GM12878 (cell line): ENCODE measurements at regions of chr9 and their contacts with region 1.

Region 1: GRCh38 chr9:71819115-71819739 is 50.9 kb upstream of the CEMIP2 start:
- DNase-seq: no peak
- ATAC-seq: no peak
- H3K4me3 ChIP-seq: no peak overlapping the region
- H3K27ac ChIP-seq: no peak overlapping the region
- H3K4me1 ChIP-seq: no peaks in the 10 kb centered on the region
- H3K27me3 ChIP-seq: no peaks in the 10 kb centered on the region
- CTCF ChIP-seq: peak; percentile 56 to 62 (median 58); a peak in 5 of 6 replicates
- EP300 ChIP-seq: no peak
- POLR2A ChIP-seq: no peak
- RAD21 ChIP-seq: peak; percentile 69

Region 2: DNA sequence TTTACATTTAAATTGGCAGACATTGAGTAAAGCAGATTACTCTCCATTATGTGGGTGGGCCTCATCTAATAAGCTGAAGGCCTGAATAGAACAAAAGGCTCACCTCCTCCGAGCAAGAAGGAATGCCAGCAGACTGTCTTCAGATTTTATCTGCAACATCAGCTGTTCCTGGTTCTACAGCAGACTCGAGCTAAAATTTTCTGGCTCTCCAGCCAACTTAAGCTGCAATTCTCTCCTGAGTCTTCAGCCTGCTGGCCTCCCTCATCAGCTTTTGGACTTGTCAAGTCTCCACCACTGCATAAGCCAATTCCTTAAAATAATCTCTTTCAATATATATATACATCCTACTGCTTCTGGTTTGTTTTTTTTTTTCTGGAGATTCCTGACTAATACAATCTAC is 710.3 kb before region 1 on chr9:
- CTCF ChIA-PET with region 1: no interaction called
- POLR2A ChIA-PET with region 1: no interaction called
- RAD21 ChIA-PET with region 1: no interaction called
- SMC1A ChIA-PET with region 1: no interaction called
- in situ Hi-C with region 1: no loop called
- intact Hi-C with region 1: no loop called
- DNase-seq: no peak
- ATAC-seq: no peak
- H3K4me3 ChIP-seq: no peak overlapping the region
- H3K27ac ChIP-seq: no peak overlapping the region
- H3K4me1 ChIP-seq: no peaks in the 10 kb centered on the region
- H3K27me3 ChIP-seq: no peaks in the 10 kb centered on the region; a peak in 1 of 4 replicates
- CTCF ChIP-seq: no peak
- EP300 ChIP-seq: no peak
- POLR2A ChIP-seq: no peak
- RAD21 ChIP-seq: no peak

Region 3: GRCh38 chr9:71571186-71571585 is 248.0 kb before region 1 on chr9:
- CTCF ChIA-PET with region 1: no interaction called
- POLR2A ChIA-PET with region 1: no interaction called
- RAD21 ChIA-PET with region 1: no interaction called
- SMC1A ChIA-PET with region 1: no interaction called
- in situ Hi-C with region 1: no loop called
- intact Hi-C with region 1: no loop called
- DNase-seq: no peak
- ATAC-seq: no peak
- H3K4me3 ChIP-seq: no peak overlapping the region
- H3K27ac ChIP-seq: no peak overlapping the region
- H3K4me1 ChIP-seq: no peaks in the 10 kb centered on the region
- H3K27me3 ChIP-seq: no peaks in the 10 kb centered on the region
- CTCF ChIP-seq: no peak
- EP300 ChIP-seq: no peak
- POLR2A ChIP-seq: no peak
- RAD21 ChIP-seq: no peak

Region 4: DNA sequence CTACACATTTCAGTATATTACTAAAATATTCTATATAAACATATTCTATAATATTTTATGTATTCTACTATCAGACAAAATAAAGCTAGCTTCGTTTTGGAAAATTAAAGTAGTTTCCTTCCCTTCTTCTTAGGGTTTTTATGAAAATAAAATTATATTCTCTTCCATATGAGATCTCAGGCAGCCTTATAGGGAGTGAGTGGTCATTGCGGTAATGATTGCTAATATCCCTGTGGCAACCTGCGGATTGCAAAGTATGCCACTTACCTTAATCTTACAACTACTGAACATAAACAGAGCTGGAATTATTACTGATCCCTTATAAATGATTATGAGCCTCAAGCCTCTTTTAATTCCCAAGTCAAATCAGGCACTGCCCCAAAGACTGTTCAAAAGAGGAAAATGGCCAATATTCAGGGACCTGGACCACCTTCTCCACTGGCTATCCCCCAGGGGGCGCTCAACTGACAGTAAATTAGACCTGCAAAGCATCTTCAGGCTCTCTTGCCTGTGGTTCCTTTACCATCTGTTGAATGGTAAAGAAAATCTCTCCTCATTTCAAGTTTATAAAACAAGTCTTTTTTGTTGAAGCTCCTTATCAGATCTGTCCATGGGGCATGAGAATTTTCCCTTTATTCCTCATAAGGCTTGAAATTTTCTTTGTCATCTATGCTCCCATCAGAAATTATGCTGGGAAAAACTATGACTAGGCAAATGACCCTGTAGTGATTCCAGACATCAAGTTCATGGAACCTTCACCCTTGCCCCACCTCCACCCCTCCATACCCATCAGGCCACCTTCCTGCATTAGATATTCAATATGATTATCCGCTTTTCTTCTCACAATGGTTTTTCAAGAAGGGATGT is 214.8 kb before region 1 on chr9:
- CTCF ChIA-PET with region 1: interaction called, 19 read pairs
- POLR2A ChIA-PET with region 1: no interaction called
- RAD21 ChIA-PET with region 1: interaction called, 6 read pairs
- SMC1A ChIA-PET with region 1: interaction called, 25 read pairs
- in situ Hi-C with region 1: loop called (anchors 5 kb)
- intact Hi-C with region 1: loop called (anchors 1 kb)
- DNase-seq: no peak
- ATAC-seq: peak; percentile 93
- H3K4me3 ChIP-seq: no peak overlapping the region
- H3K27ac ChIP-seq: no peak overlapping the region
- H3K4me1 ChIP-seq: no peaks in the 10 kb centered on the region
- H3K27me3 ChIP-seq: no peaks in the 10 kb centered on the region
- CTCF ChIP-seq: peak; percentile 60 to 74 (median 62)
- EP300 ChIP-seq: no peak
- POLR2A ChIP-seq: no peak
- RAD21 ChIP-seq: peak; percentile 75

Region 5: GRCh38 chr9:71737455-71737854 is 81.8 kb before region 1 on chr9:
- CTCF ChIA-PET with region 1: no interaction called
- POLR2A ChIA-PET with region 1: no interaction called
- RAD21 ChIA-PET with region 1: no interaction called
- SMC1A ChIA-PET with region 1: no interaction called
- in situ Hi-C with region 1: no loop called
- intact Hi-C with region 1: no loop called
- DNase-seq: no peak
- ATAC-seq: no peak
- H3K4me3 ChIP-seq: no peak overlapping the region
- H3K27ac ChIP-seq: no peak overlapping the region
- H3K4me1 ChIP-seq: no peaks in the 10 kb centered on the region
- H3K27me3 ChIP-seq: no peaks in the 10 kb centered on the region
- CTCF ChIP-seq: no peak
- EP300 ChIP-seq: no peak
- POLR2A ChIP-seq: no peak
- RAD21 ChIP-seq: no peak

Region 6: GRCh38 chr9:71778085-71778484 is 41.1 kb before region 1 on chr9:
- CTCF ChIA-PET with region 1: interaction called, 13 read pairs
- POLR2A ChIA-PET with region 1: no interaction called
- RAD21 ChIA-PET with region 1: interaction called, 6 read pairs
- SMC1A ChIA-PET with region 1: interaction called, 17 read pairs
- in situ Hi-C with region 1: no loop called
- intact Hi-C with region 1: loop called (anchors 5 kb)
- DNase-seq: no peak
- ATAC-seq: no peak
- H3K4me3 ChIP-seq: no peak overlapping the region
- H3K27ac ChIP-seq: no peak overlapping the region
- H3K4me1 ChIP-seq: peaks cover 18% of the 10 kb centered on the region
- H3K27me3 ChIP-seq: no peaks in the 10 kb centered on the region
- CTCF ChIP-seq: no peak
- EP300 ChIP-seq: no peak
- POLR2A ChIP-seq: no peak
- RAD21 ChIP-seq: no peak

Region 7: GRCh38 chr9:71795097-71795813 is 24.0 kb before region 1 on chr9:
- CTCF ChIA-PET with region 1: interaction called, 10 read pairs
- POLR2A ChIA-PET with region 1: no interaction called
- RAD21 ChIA-PET with region 1: no interaction called
- SMC1A ChIA-PET with region 1: interaction called, 15 read pairs
- in situ Hi-C with region 1: no loop called
- intact Hi-C with region 1: no loop called
- DNase-seq: peak; percentile 91
- ATAC-seq: peak; percentile 89
- H3K4me3 ChIP-seq: no peak overlapping the region
- H3K27ac ChIP-seq: no peak overlapping the region
- H3K4me1 ChIP-seq: peaks cover 32% of the 10 kb centered on the region
- H3K27me3 ChIP-seq: no peaks in the 10 kb centered on the region
- CTCF ChIP-seq: no peak
- EP300 ChIP-seq: peak in 1 of 2 experiments; percentile 31; a peak in 1 of 4 replicates
- POLR2A ChIP-seq: no peak
- RAD21 ChIP-seq: no peak

Region 8: DNA sequence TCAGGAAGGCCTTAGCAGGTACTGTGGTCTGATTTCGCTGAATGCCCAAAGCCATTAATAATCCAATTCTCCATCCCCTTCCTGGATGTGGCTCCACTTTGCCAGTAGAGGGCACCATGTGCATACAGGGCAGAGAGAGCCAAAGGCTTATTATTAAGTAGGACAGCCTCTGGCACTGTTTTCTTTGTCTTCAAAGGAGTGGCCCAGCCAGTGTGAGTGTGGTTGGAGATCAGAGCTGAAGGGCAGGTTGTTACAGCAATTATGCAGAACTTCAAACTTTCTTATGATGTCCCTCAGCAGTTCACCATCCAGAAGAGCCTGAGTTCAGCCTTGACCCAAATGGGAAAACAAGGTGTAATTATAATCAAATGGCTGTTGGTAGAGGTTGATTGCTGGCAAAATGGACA is 12.3 kb before region 1 on chr9:
- CTCF ChIA-PET with region 1: interaction called, 22 read pairs
- POLR2A ChIA-PET with region 1: no interaction called
- RAD21 ChIA-PET with region 1: interaction called, 6 read pairs
- SMC1A ChIA-PET with region 1: interaction called, 30 read pairs
- in situ Hi-C with region 1: no loop called
- intact Hi-C with region 1: no loop called
- DNase-seq: no peak
- ATAC-seq: peak; percentile 100
- H3K4me3 ChIP-seq: no peak overlapping the region
- H3K27ac ChIP-seq: no peak overlapping the region
- H3K4me1 ChIP-seq: no peaks in the 10 kb centered on the region
- H3K27me3 ChIP-seq: no peaks in the 10 kb centered on the region
- CTCF ChIP-seq: peak; percentile 85 to 94 (median 91)
- EP300 ChIP-seq: no peak
- POLR2A ChIP-seq: no peak
- RAD21 ChIP-seq: peak; percentile 94

Region 9: DNA sequence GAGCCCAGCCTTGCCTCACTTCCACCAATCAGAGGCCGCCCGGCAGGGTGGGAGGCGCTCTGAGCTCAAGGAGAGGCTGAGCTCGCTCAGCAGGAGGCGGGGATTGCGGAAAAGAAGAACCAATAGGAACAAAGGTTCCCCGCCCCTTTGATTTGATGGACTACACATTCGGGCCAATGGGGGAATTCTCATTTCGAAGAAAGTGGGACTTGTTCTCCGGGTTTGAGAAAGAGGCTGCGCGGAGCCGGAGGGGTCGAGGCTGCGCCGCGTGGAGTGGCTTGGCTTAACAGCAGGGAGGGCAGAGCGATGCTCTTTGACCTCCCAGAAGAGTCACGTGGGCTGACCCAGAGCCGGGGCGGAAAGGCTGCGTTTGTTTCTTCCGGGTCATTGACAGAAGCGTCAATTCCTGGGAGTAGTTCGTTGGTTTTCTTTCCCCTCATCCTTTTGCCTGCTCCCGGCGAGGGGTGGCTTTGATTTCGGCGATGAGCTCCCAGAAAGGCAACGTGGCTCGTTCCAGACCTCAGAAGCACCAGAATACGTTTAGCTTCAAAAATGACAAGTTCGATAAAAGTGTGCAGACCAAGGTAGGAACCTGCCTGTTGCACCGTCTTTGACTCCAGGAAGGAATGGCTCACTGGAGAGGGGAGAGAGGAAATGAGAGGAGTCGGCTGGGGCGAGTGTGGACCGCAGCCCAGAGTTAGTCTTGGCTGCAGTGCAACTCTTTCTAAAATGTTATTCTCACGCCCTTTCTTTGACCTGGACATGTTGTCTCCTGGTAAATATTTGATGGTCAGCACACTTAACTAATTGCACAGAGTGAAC is 92.2 kb after region 1 on chr9 and contains the start of gene C9orf85:
- CTCF ChIA-PET with region 1: interaction called, 8 read pairs
- POLR2A ChIA-PET with region 1: no interaction called
- RAD21 ChIA-PET with region 1: interaction called, 4 read pairs
- SMC1A ChIA-PET with region 1: interaction called, 3 read pairs
- in situ Hi-C with region 1: no loop called
- intact Hi-C with region 1: loop called (anchors 5 kb)
- DNase-seq: peak; percentile 98
- ATAC-seq: peak; percentile 94
- H3K4me3 ChIP-seq: peak within 1 kb of the TSS; percentile 91
- H3K27ac ChIP-seq: peak within 1 kb of the TSS; percentile 79
- H3K4me1 ChIP-seq: peaks cover 3% of the 10 kb centered on the region
- H3K27me3 ChIP-seq: no peaks in the 10 kb centered on the region
- CTCF ChIP-seq: no peak
- EP300 ChIP-seq: no peak
- POLR2A ChIP-seq: no peak
- RAD21 ChIP-seq: no peak
- polyA plus RNA-seq, gene C9orf85: 16.6 to 16.7 TPM

Region 10: DNA sequence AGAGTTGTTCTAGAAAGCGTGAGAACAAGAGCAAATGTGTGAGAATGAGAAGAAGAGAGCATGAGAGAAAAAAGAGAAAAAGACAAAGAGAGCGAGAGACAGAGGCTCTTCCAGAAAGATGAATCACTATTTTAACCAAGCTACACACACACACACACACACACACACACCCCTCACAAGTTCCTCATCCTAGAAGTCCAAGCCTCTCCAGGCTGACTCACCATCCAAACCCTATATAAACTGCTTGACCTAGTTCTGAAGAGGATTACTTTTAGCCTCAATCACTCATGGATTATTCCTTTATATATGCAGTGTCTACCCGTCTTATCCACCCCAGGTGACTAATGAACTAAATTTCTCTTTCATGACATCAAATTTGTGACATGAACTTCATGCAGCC is 203.6 kb after region 1 on chr9:
- CTCF ChIA-PET with region 1: interaction called, 64 read pairs
- POLR2A ChIA-PET with region 1: interaction called, 4 read pairs
- RAD21 ChIA-PET with region 1: interaction called, 7 read pairs
- SMC1A ChIA-PET with region 1: interaction called, 46 read pairs
- in situ Hi-C with region 1: no loop called
- intact Hi-C with region 1: no loop called
- DNase-seq: no peak
- ATAC-seq: no peak
- H3K4me3 ChIP-seq: no peak overlapping the region
- H3K27ac ChIP-seq: no peak overlapping the region
- H3K4me1 ChIP-seq: no peaks in the 10 kb centered on the region
- H3K27me3 ChIP-seq: no peaks in the 10 kb centered on the region
- CTCF ChIP-seq: no peak
- EP300 ChIP-seq: no peak
- POLR2A ChIP-seq: no peak
- RAD21 ChIP-seq: no peak

Region 11: GRCh38 chr9:72043569-72043968 is 224.3 kb after region 1 on chr9:
- CTCF ChIA-PET with region 1: no interaction called
- POLR2A ChIA-PET with region 1: no interaction called
- RAD21 ChIA-PET with region 1: no interaction called
- SMC1A ChIA-PET with region 1: no interaction called
- in situ Hi-C with region 1: no loop called
- intact Hi-C with region 1: no loop called
- DNase-seq: no peak
- ATAC-seq: no peak
- H3K4me3 ChIP-seq: no peak overlapping the region
- H3K27ac ChIP-seq: no peak overlapping the region
- H3K4me1 ChIP-seq: no peaks in the 10 kb centered on the region; the same call in 1 of the 2 replicates
- H3K27me3 ChIP-seq: no peaks in the 10 kb centered on the region
- CTCF ChIP-seq: no peak
- EP300 ChIP-seq: no peak
- POLR2A ChIP-seq: no peak
- RAD21 ChIP-seq: no peak